Sigmoid colon (tissue), 7 donors: ENCODE measurements at regions of chr4 and their contacts with region 1.

Region 1: DNA sequence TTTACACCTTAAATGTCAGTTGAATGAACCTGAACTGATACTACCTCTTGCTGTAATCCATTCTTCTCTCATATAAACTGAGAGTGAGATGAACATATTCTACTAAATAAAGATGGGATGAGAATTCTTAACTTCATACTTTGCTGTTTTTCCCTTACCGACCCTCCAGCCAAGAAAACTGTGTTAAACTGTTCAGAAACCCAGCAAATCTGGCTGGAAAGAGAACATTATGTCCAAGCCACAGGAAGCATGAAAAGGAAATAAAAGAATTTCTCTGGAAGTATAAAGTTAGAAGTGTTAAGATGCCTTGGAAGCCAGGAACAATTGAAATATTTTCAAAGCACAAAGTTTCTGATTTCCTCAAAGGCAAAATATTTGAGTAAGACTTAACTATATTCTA is 22.9 kb downstream of the NPY1R start:
- DNase-seq: no peak
- H3K4me3 ChIP-seq: no peak overlapping the region
- H3K27ac ChIP-seq: no peak overlapping the region
- H3K4me1 ChIP-seq: no peaks in the 10 kb centered on the region
- H3K27me3 ChIP-seq: no peaks in the 10 kb centered on the region
- CTCF ChIP-seq: no peak
- EP300 ChIP-seq: no peak
- POLR2A ChIP-seq: no peak

Region 2: GRCh38 chr4:163085085-163085484 is 224.4 kb before region 1 on chr4:
- intact Hi-C with region 1: no loop called
- DNase-seq: no peak
- H3K4me3 ChIP-seq: no peak overlapping the region
- H3K27ac ChIP-seq: no peak overlapping the region
- H3K4me1 ChIP-seq: no peaks in the 10 kb centered on the region
- H3K27me3 ChIP-seq: no peaks in the 10 kb centered on the region
- CTCF ChIP-seq: no peak
- EP300 ChIP-seq: no peak
- POLR2A ChIP-seq: no peak

Region 3: GRCh38 chr4:163191999-163192398 is 117.5 kb before region 1 on chr4:
- intact Hi-C with region 1: no loop called
- DNase-seq: no peak
- H3K4me3 ChIP-seq: no peak overlapping the region
- H3K27ac ChIP-seq: no peak overlapping the region
- H3K4me1 ChIP-seq: no peaks in the 10 kb centered on the region
- H3K27me3 ChIP-seq: no peaks in the 10 kb centered on the region
- CTCF ChIP-seq: no peak
- EP300 ChIP-seq: no peak
- POLR2A ChIP-seq: no peak

Region 4: GRCh38 chr4:163256680-163257343 is 52.7 kb before region 1 on chr4:
- intact Hi-C with region 1: loop called (anchors 5 kb)
- DNase-seq: no peak
- H3K4me3 ChIP-seq: no peak overlapping the region
- H3K27ac ChIP-seq: no peak overlapping the region
- H3K4me1 ChIP-seq: no peaks in the 10 kb centered on the region
- H3K27me3 ChIP-seq: no peaks in the 10 kb centered on the region
- CTCF ChIP-seq: no peak
- EP300 ChIP-seq: no peak
- POLR2A ChIP-seq: no peak